ENCODE measurements at regions of chr12 and their contacts with region 1.

Region 1: GRCh38 chr12:85866986-85867776 is 6.9 kb upstream of the NTS start:
- DNase-seq: peak in 1 of 2 donors; percentile 82
- H3K4me3 ChIP-seq: no peak overlapping the region
- H3K27ac ChIP-seq: no peak overlapping the region
- H3K4me1 ChIP-seq: peaks cover 0 to 7% (median 0%) of the 10 kb centered on the region in 4 donors
- H3K27me3 ChIP-seq: no peaks in the 10 kb centered on the region
- CTCF ChIP-seq: peak in 5 of 7 experiments; percentile 65 to 79 (median 76)
- EP300 ChIP-seq: no peak
- POLR2A ChIP-seq: no peak

Region 2: DNA sequence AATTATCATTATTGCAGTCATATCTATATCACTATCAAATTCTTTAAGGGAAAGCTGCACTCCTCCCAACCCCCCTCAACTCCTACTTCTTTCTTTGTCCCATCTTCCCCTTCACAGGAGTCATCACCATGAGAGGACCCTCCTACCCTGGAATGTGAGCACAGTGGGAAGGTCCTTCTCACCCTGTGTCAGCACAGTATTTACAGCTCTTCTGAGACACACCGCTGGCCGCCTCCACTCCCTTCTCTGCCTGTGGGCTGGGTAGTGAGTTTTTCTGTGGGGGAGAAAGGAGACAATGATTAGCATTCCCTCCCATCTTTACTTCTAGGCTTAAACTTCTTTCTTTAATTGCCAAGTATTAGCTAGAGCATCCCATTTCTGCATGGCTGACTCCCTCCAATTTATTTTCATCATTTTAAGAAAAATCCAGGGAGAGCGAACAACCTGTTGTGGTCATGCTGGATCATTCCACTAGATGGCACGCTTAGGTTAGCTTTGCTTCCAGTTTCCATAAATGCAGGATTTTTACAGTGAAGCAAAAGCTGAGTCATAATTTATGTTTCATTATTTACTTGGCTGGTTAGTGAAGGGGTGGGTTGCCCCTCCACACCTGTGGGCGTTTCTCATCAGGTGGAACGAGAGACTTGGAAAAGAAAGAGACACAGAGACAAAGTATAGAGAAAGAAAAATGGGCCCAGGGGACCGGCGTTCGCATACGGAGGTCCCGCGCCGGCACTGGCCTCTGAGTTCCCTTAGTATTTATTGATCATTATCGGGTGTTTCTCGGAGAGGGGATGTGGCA is 398.6 kb before region 1 on chr12:
- intact Hi-C with region 1: loop called (anchors 5 kb)
- DNase-seq: peak; percentile 27 to 88
- H3K4me3 ChIP-seq: peak overlapping the region; percentile 31 to 47 (median 38)
- H3K27ac ChIP-seq: peak overlapping the region in 1 of 5 donors; percentile 9
- H3K4me1 ChIP-seq: peaks cover 0 to 8% (median 3%) of the 10 kb centered on the region in 4 donors
- H3K27me3 ChIP-seq: peaks cover 0 to 12% (median 0%) of the 10 kb centered on the region in 3 donors
- CTCF ChIP-seq: peak in 5 of 7 experiments; percentile 49 to 68 (median 59)
- EP300 ChIP-seq: no peak
- POLR2A ChIP-seq: no peak

Region 3: DNA sequence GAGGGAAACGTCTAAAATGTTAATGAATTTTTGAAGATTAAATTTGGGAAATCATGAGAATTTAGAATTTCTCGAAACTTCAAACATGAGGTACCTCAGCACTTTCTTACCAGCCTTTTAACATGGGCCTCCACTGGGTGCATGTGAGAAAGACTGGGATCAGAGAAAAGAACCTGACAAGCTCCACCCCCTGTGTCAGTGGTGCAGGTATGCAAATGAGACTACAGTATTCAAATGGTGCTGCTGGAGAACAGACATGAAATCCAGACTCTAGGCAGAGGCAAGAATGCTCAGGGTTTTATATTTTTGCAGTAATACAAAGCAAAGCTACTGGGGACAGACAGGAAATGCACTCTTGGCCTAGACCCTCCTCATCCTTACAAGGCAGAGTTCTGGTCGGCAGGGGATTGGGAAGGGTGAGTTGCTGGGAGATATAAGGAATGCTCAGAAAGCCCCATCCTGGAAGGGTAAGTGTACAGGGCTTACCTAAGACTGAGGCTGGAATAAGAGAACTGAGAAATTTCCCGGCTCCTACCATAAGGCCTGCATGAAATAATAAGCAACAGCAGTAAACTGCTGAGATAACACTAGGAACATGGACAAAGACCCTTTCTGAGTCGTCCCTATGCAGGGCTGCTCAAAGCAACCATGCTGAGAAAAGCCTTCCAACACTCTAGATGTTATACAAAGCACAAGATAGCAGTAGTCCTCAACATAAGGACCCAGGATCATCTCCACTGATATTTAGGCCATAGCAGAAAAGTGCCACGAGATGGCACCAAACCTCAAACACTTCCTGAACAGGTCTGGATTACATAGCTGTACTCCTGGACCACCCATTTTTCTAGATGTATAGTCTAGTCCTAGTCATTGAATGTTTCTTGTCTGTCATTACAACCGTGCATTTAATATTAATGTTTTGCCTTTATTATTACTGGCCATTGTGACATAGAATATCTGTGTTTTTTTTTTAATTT is 291.8 kb before region 1 on chr12:
- intact Hi-C with region 1: loop called (anchors 5 kb)
- DNase-seq: peak; percentile 53 to 81
- H3K4me3 ChIP-seq: no peak overlapping the region
- H3K27ac ChIP-seq: no peak overlapping the region
- H3K4me1 ChIP-seq: no peaks in the 10 kb centered on the region
- H3K27me3 ChIP-seq: no peaks in the 10 kb centered on the region
- CTCF ChIP-seq: peak in 5 of 7 experiments; percentile 33 to 57 (median 48)
- EP300 ChIP-seq: no peak
- POLR2A ChIP-seq: no peak